ENCODE measurements at regions of chr7 and their contacts with region 1.

Region 1: GRCh38 chr7:25069900-25070443 is 55.1 kb downstream of the CYCS start:
- DNase-seq: peak; percentile 14 to 24
- ATAC-seq: peak; percentile 83 to 88
- H3K4me3 ChIP-seq: peak overlapping the region; percentile 29 to 47 (median 36)
- H3K27ac ChIP-seq: no peak overlapping the region
- H3K4me1 ChIP-seq: peaks cover 0 to 3% of the 10 kb centered on the region in 2 donors
- H3K27me3 ChIP-seq: no peaks in the 10 kb centered on the region
- CTCF ChIP-seq: peak; percentile 70 to 88 (median 74)
- POLR2A ChIP-seq: no peak

Region 2: DNA sequence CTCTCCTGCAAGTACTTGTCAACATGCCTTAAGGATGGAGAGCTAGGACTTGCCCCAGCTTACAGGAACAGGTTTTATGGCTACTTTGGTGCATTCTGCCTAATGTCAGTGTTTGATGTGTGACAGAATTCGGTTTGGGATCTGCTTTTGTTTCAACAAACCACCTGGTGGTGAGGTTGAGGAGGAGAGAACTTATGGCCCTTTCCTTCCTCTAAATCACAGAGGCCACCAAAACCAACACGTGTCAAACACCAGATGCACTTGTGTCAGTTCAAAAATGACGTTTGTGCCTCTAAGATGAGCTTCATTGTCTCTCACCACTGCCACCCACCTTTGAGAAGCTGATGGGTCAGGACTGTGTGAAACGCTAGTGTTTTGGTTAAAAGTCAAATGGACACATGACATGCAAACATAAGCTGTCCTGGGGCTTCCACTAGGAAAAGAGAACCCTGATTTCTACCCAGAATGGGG is 173.9 kb before region 1 on chr7:
- in situ Hi-C with region 1: no loop called
- intact Hi-C with region 1: loop called (anchors 5 kb)
- DNase-seq: no peak
- ATAC-seq: no peak
- H3K4me3 ChIP-seq: no peak overlapping the region
- H3K27ac ChIP-seq: no peak overlapping the region
- H3K4me1 ChIP-seq: peaks cover 0 to 6% of the 10 kb centered on the region in 2 donors
- H3K27me3 ChIP-seq: no peaks in the 10 kb centered on the region
- CTCF ChIP-seq: no peak
- POLR2A ChIP-seq: no peak

Region 3: GRCh38 chr7:25009257-25009656 is 60.7 kb before region 1 on chr7:
- in situ Hi-C with region 1: no loop called
- intact Hi-C with region 1: loop called (anchors 10 kb)
- DNase-seq: no peak
- ATAC-seq: no peak
- H3K4me3 ChIP-seq: no peak overlapping the region
- H3K27ac ChIP-seq: no peak overlapping the region
- H3K4me1 ChIP-seq: no peaks in the 10 kb centered on the region
- H3K27me3 ChIP-seq: no peaks in the 10 kb centered on the region
- CTCF ChIP-seq: no peak
- POLR2A ChIP-seq: no peak

Region 4: GRCh38 chr7:25054819-25055519 is 15.0 kb before region 1 on chr7:
- in situ Hi-C with region 1: no loop called
- intact Hi-C with region 1: no loop called
- DNase-seq: no peak
- ATAC-seq: no peak
- H3K4me3 ChIP-seq: no peak overlapping the region
- H3K27ac ChIP-seq: no peak overlapping the region
- H3K4me1 ChIP-seq: no peaks in the 10 kb centered on the region
- H3K27me3 ChIP-seq: no peaks in the 10 kb centered on the region
- CTCF ChIP-seq: no peak
- POLR2A ChIP-seq: no peak